ENCODE measurements at regions of chr10 and their contacts with region 1.

Region 1: GRCh38 chr10:57579926-57580325 is 687.8 kb downstream of the IPMK start:
- DNase-seq: peak in 1 of 2 experiments; percentile 21
- H3K4me3 ChIP-seq: no peak overlapping the region
- H3K27ac ChIP-seq: no peak overlapping the region
- H3K4me1 ChIP-seq: no peaks in the 10 kb centered on the region
- H3K27me3 ChIP-seq: no peaks in the 10 kb centered on the region
- CTCF ChIP-seq: peak; percentile 3 to 75 (median 74)
- EP300 ChIP-seq: no peak
- POLR2A ChIP-seq: no peak
- RAD21 ChIP-seq: peak; percentile 94

Region 2: GRCh38 chr10:57468894-57469432 is 111.0 kb before region 1 on chr10:
- CTCF ChIA-PET with region 1: no interaction called
- POLR2A ChIA-PET with region 1: no interaction called
- DNase-seq: no peak
- H3K4me3 ChIP-seq: no peak overlapping the region
- H3K27ac ChIP-seq: no peak overlapping the region
- H3K4me1 ChIP-seq: no peaks in the 10 kb centered on the region
- H3K27me3 ChIP-seq: no peaks in the 10 kb centered on the region
- CTCF ChIP-seq: no peak
- EP300 ChIP-seq: no peak
- POLR2A ChIP-seq: no peak
- RAD21 ChIP-seq: no peak

Region 3: GRCh38 chr10:58064714-58065528 is 485.0 kb after region 1 on chr10:
- CTCF ChIA-PET with region 1: interaction called, 20 read pairs
- POLR2A ChIA-PET with region 1: no interaction called
- DNase-seq: peak in 1 of 2 experiments; percentile 52
- H3K4me3 ChIP-seq: no peak overlapping the region
- H3K27ac ChIP-seq: no peak overlapping the region
- H3K4me1 ChIP-seq: peaks cover 0 to 9% (median 7%) of the 10 kb centered on the region in 4 experiments; a peak in 6 of 7 replicates
- H3K27me3 ChIP-seq: no peaks in the 10 kb centered on the region
- CTCF ChIP-seq: peak in 2 of 3 experiments; percentile 73 to 77; a peak in 3 of 4 replicates
- EP300 ChIP-seq: no peak
- POLR2A ChIP-seq: no peak
- RAD21 ChIP-seq: peak; percentile 98 to 99